Activated T-helper 2 cell treated with anti-CD3 and anti-CD28 coated beads, Interferon-gamma antibody, Interleukin-2, Interleukin-4, amounts not matched to agents 10 μg/mL and 5 μg/mL and 100 μg/mL, durations not matched to agents 14 hours and 24 hours and 36 hours (primary cell): ENCODE measurements at regions of chr12 and their contacts with region 1.

Region 1: DNA sequence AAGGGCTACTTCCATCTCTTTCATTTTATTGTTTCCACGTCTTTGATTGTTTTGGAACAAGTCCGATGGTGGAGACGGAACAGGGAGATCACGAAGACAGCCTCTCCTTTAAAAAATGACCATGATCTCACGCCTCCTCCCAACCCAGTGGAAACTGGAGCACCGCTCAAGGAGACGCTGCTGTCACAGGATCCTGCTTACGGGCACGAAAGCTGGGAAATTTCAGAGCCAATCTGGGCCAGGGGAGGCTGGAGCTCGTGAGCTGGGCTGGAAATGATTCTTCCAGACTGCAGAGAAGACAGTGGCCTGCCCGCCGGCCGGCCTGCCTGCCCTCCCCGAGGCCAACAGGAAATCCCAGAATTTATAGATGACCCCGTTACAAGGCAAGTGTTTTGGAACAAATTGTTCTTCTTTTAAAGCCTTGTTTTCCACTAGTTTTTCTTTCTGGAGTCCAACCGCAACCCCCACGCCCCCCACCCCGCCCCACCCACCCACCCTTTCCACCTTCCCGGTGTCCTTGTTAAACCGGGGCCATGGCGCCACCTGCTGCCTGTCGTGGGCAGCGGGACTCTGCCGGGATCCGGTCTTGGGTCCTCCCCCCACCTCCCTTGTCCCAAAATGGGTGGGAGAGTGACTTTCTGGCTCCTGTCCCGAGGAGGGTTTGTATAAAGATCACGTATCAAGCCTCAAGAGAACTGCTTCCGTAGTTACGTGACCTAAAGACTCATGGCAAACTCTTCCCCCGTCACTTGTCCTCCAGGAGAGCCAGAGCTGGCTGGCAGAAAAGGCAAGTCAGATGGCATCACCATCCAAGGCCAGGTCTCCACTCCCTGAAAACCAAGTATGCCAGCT is 40.3 kb downstream of the MAP1LC3B2 start:
- DNase-seq: peak; percentile 30
- H3K4me3 Mint-ChIP-seq: no peak overlapping the region
- H3K27ac Mint-ChIP-seq: no peak overlapping the region
- H3K4me1 Mint-ChIP-seq: peaks cover 26% of the 10 kb centered on the region
- H3K27me3 Mint-ChIP-seq: no peaks in the 10 kb centered on the region

Region 2: GRCh38 chr12:115998119-115998633 is 601.3 kb before region 1 on chr12:
- intact Hi-C with region 1: loop called (anchors 10 kb)
- DNase-seq: no peak
- H3K4me3 Mint-ChIP-seq: no peak overlapping the region
- H3K27ac Mint-ChIP-seq: no peak overlapping the region
- H3K4me1 Mint-ChIP-seq: peaks cover 5% of the 10 kb centered on the region
- H3K27me3 Mint-ChIP-seq: no peaks in the 10 kb centered on the region

Region 3: GRCh38 chr12:116369921-116370404 is 229.5 kb before region 1 on chr12:
- intact Hi-C with region 1: loop called (anchors 10 kb)
- DNase-seq: no peak
- H3K4me3 Mint-ChIP-seq: no peak overlapping the region
- H3K27ac Mint-ChIP-seq: no peak overlapping the region
- H3K4me1 Mint-ChIP-seq: no peaks in the 10 kb centered on the region
- H3K27me3 Mint-ChIP-seq: no peaks in the 10 kb centered on the region

Region 4: GRCh38 chr12:116539905-116540482 is 59.5 kb before region 1 on chr12:
- intact Hi-C with region 1: loop called (anchors 5 kb)
- DNase-seq: no peak
- H3K4me3 Mint-ChIP-seq: no peak overlapping the region
- H3K27ac Mint-ChIP-seq: no peak overlapping the region
- H3K4me1 Mint-ChIP-seq: peaks cover 33% of the 10 kb centered on the region
- H3K27me3 Mint-ChIP-seq: no peaks in the 10 kb centered on the region